ENCODE measurements at regions of chr4 and their contacts with region 1.

Region 1: DNA sequence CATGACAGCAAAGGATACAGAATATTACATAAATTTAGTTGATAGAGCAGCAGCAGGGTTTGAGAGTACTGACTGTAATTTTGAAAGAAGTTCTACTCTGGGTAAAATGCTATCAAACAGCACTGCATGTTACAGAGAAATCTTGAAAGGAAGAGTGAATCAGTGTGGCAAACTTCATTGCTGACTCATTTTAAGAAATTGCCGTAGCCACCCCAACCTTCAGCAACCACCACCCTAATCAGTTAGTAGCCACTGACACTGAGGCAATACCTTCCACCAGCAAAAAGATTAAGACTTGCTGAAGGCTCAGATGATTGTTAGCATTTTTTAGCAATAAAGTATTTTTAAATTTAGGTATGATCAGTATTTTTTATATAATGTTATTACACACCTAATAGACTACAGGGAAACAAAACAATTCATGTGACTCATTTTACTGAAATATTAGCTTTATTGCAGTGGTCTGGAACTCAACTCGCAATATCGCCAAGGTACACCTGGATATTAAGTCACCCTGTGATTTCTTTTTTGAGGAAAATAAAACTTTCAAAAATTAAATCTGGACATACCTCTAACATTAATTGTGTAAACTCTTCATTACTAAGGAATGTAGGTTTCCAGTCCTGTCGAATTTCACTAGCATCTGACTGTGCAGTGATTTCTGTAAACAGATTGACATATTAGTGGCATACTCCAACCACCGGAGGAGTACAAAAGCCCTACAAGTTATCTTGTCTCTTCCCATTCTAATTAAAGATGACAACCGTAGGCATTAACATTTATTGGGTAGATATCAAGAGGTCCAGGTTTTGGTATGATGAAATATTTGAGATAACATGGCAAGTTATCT is 71.1 kb downstream of the CLOCK start:
- DNase-seq: peak; percentile 78
- H3K4me3 ChIP-seq: no peak overlapping the region
- H3K27ac ChIP-seq: no peak overlapping the region
- H3K4me1 ChIP-seq: peaks cover 17% of the 10 kb centered on the region
- H3K27me3 ChIP-seq: no peaks in the 10 kb centered on the region
- CTCF ChIP-seq: no peak

Region 2: DNA sequence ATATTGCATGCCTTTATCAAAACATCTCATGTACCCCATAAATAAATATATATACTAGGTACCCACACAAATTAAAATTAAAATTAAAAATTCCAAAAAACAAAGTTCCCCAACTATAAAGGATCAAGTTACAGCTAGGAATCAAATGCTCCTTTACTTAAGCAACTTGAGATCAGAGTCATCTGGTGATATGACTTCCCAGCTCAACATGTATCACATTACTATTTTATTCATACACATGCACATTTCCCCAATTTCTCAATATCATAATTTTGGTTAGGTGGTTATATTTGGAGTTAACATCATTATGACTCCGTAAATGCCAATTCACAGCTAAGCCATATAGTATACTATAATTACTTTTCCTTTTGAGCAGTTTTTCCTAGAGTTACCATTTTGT is 10.2 kb after region 1 on chr4:
- CTCF ChIA-PET with region 1: no interaction called
- dilution Hi-C with region 1: no loop called
- in situ Hi-C with region 1: no loop called
- intact Hi-C with region 1: loop called (anchors 1 kb)
- DNase-seq: no peak
- H3K4me3 ChIP-seq: no peak overlapping the region
- H3K27ac ChIP-seq: no peak overlapping the region
- H3K4me1 ChIP-seq: no peaks in the 10 kb centered on the region
- H3K27me3 ChIP-seq: no peaks in the 10 kb centered on the region
- CTCF ChIP-seq: no peak

Region 3: GRCh38 chr4:55781812-55782211 is 306.2 kb after region 1 on chr4:
- CTCF ChIA-PET with region 1: no interaction called
- dilution Hi-C with region 1: no loop called
- in situ Hi-C with region 1: no loop called
- intact Hi-C with region 1: no loop called
- DNase-seq: no peak
- H3K4me3 ChIP-seq: no peak overlapping the region
- H3K27ac ChIP-seq: no peak overlapping the region
- H3K4me1 ChIP-seq: no peaks in the 10 kb centered on the region
- H3K27me3 ChIP-seq: no peaks in the 10 kb centered on the region
- CTCF ChIP-seq: no peak

Measured in mammary epithelial cell (primary cell).